Caco-2 (cell line): ENCODE measurements at regions of chrX and their contacts with region 1.

Region 1: GRCh38 chrX:36573720-36574119 is 434.4 kb upstream of the FAM47C start:
- DNase-seq: no peak
- H3K4me3 ChIP-seq: no peak overlapping the region
- H3K4me3 Mint-ChIP-seq: no peak overlapping the region
- H3K27ac Mint-ChIP-seq: no peak overlapping the region
- H3K4me1 ChIP-seq: no peaks in the 10 kb centered on the region
- H3K4me1 Mint-ChIP-seq: no peaks in the 10 kb centered on the region
- H3K27me3 ChIP-seq: no peaks in the 10 kb centered on the region
- H3K27me3 Mint-ChIP-seq: no peaks in the 10 kb centered on the region
- CTCF ChIP-seq: no peak

Region 2: DNA sequence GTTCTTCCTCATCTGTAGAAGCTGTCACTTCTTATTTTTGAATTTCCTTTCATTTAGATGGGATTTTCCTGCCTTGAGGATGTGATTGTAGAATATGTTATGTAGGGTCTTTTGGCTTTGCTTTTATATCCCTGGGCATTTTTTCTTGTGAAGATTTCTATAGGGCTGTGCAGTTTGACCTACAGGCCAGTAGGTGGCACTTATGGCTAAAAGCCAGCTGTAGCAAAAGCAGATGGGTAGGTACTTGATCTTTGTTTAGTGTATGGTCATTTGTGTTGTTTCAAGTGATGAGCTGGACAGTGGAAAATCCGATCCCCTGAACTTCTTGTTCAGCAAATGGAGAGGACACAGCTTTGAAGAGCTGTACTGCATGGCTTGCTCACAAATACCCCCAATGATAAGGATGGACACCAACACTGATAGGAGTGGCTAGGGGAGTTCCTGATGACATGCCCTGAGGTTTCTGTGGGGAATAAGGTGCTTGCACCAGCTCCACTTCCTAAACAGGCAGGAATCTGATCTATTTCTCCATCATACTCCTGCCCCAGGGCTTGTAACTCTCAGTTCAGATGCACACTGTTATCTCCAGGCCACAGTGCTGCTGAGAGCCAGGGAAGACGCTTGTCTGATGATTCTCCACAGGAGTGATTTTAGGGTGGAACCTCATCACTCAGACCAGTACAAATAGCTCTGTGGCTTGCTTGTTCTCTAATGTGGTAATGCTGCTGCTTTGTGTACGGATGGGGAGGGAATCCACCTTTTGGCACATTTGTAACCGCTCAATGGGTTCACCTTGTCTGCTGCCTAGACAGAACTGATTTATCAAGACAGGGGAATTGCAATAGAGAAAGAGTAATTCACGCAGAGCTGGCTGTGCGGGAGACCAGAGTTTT is 1192.7 kb before region 1 on chrX:
- CTCF ChIA-PET with region 1: no interaction called
- POLR2A ChIA-PET with region 1: no interaction called
- intact Hi-C with region 1: loop called (anchors 5 kb)
- DNase-seq: peak in 1 of 2 experiments; percentile 6
- H3K4me3 ChIP-seq: no peak overlapping the region
- H3K4me3 Mint-ChIP-seq: no peak overlapping the region
- H3K27ac Mint-ChIP-seq: no peak overlapping the region
- H3K4me1 ChIP-seq: no peaks in the 10 kb centered on the region
- H3K4me1 Mint-ChIP-seq: no peaks in the 10 kb centered on the region
- H3K27me3 ChIP-seq: no peaks in the 10 kb centered on the region
- H3K27me3 Mint-ChIP-seq: peaks cover 2% of the 10 kb centered on the region
- CTCF ChIP-seq: peak; percentile 34 to 62

Region 3: DNA sequence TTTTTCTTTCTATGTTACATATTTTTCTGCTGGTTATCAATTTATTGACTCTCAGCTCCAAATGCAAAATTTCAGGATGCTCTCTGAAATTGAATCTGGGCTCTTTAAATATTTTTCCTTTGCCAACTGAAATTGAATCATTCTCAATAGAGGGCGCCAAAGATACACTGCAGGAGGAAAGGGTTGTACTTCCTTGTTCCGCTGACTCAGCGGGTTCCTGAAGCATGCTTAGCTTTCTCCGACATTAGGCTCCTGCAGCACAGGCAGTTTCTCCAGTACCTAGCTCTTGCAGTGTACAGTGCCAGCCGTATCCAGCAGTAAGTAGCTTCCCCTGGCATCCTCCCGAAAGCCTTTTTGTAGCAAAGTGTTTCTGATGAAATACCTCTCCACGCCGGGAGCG is 683.0 kb before region 1 on chrX:
- CTCF ChIA-PET with region 1: no interaction called
- POLR2A ChIA-PET with region 1: no interaction called
- intact Hi-C with region 1: loop called (anchors 5 kb)
- DNase-seq: peak; percentile 59 to 60
- H3K4me3 ChIP-seq: no peak overlapping the region
- H3K4me3 Mint-ChIP-seq: no peak overlapping the region
- H3K27ac Mint-ChIP-seq: no peak overlapping the region
- H3K4me1 ChIP-seq: no peaks in the 10 kb centered on the region
- H3K4me1 Mint-ChIP-seq: no peaks in the 10 kb centered on the region
- H3K27me3 ChIP-seq: no peaks in the 10 kb centered on the region
- H3K27me3 Mint-ChIP-seq: no peaks in the 10 kb centered on the region
- CTCF ChIP-seq: peak; percentile 23 to 47

Region 4: DNA sequence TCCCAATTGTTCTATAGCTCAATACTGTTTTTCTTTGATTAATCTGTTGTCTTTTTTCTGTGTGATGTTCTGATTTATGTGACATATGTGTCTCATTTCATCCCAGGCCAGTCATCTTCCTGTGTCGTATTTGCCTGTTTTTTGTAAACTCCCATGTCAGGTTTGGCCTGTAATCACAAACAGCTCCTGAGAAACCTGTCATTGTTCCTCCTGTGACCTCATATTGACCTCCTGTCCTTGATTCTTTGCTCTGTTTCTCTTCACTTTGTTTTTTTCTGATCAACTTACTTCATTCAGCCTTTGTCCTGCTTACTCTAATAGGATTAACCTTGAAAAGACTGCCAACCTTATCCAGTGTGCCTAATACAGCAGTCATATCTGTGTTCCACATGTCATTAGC is 215.9 kb before region 1 on chrX:
- CTCF ChIA-PET with region 1: no interaction called
- POLR2A ChIA-PET with region 1: no interaction called
- intact Hi-C with region 1: no loop called
- DNase-seq: no peak
- H3K4me3 ChIP-seq: no peak overlapping the region
- H3K4me3 Mint-ChIP-seq: no peak overlapping the region
- H3K27ac Mint-ChIP-seq: no peak overlapping the region
- H3K4me1 ChIP-seq: no peaks in the 10 kb centered on the region
- H3K4me1 Mint-ChIP-seq: no peaks in the 10 kb centered on the region
- H3K27me3 ChIP-seq: no peaks in the 10 kb centered on the region
- H3K27me3 Mint-ChIP-seq: no peaks in the 10 kb centered on the region
- CTCF ChIP-seq: no peak

Region 5: DNA sequence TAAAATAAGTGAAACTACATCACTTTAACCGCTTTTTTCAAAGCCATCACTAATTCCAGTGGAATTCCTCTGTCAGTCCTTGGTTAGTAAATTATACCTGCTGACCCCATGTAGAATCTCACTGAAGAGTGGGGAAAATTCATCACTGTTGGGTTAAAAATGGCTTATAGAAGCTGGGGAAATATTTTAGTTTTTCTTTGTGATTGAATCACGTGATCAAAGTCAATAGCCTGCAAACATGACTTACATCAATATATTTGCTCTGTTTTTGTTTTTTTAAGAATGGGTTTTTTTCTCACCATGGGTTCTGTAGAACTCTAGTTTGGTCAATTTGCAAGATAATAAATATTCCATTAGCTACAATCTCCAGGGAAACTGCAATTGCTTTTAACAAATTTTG is 10.7 kb before region 1 on chrX:
- CTCF ChIA-PET with region 1: no interaction called
- POLR2A ChIA-PET with region 1: no interaction called
- intact Hi-C with region 1: no loop called
- DNase-seq: no peak
- H3K4me3 ChIP-seq: no peak overlapping the region
- H3K4me3 Mint-ChIP-seq: no peak overlapping the region
- H3K27ac Mint-ChIP-seq: no peak overlapping the region
- H3K4me1 ChIP-seq: no peaks in the 10 kb centered on the region
- H3K4me1 Mint-ChIP-seq: no peaks in the 10 kb centered on the region
- H3K27me3 ChIP-seq: no peaks in the 10 kb centered on the region
- H3K27me3 Mint-ChIP-seq: no peaks in the 10 kb centered on the region
- CTCF ChIP-seq: no peak